Activated CD4-positive, alpha-beta T cell treated with anti-CD3 and anti-CD28 coated beads for 36 hours (primary cell): ENCODE measurements at regions of chr5 and their contacts with region 1.

Region 1: GRCh38 chr5:113022661-113023060 is 46.1 kb downstream of the DCP2 start:
- DNase-seq: no peak
- ATAC-seq: peak; percentile 57
- H3K4me3 Mint-ChIP-seq: peak overlapping the region; percentile 10
- H3K27ac Mint-ChIP-seq: peak overlapping the region; percentile 38
- H3K4me1 Mint-ChIP-seq: peaks cover 64% of the 10 kb centered on the region
- H3K27me3 Mint-ChIP-seq: no peaks in the 10 kb centered on the region

Region 2: GRCh38 chr5:112976432-112977309 is 46.0 kb before region 1 on chr5 and contains the start of gene DCP2:
- CTCF ChIA-PET with region 1: no interaction called
- POLR2A ChIA-PET with region 1: no interaction called
- intact Hi-C with region 1: loop called in 1 of 2 experiments (anchors 1 kb)
- DNase-seq: peak; percentile 96
- ATAC-seq: peak; percentile 94
- H3K4me3 Mint-ChIP-seq: peak within 1 kb of the TSS; percentile 99
- H3K27ac Mint-ChIP-seq: peak within 1 kb of the TSS; percentile 98
- H3K4me1 Mint-ChIP-seq: peaks cover 39% of the 10 kb centered on the region
- H3K27me3 Mint-ChIP-seq: no peaks in the 10 kb centered on the region
- total RNA-seq, gene DCP2: 94.0 to 101 TPM

Region 3: GRCh38 chr5:113132564-113132963 is 109.9 kb after region 1 on chr5:
- CTCF ChIA-PET with region 1: no interaction called
- POLR2A ChIA-PET with region 1: no interaction called
- intact Hi-C with region 1: no loop called
- DNase-seq: no peak
- ATAC-seq: no peak
- H3K4me3 Mint-ChIP-seq: no peak overlapping the region
- H3K27ac Mint-ChIP-seq: no peak overlapping the region
- H3K4me1 Mint-ChIP-seq: no peaks in the 10 kb centered on the region
- H3K27me3 Mint-ChIP-seq: no peaks in the 10 kb centered on the region

Region 4: GRCh38 chr5:113294311-113295110 is 271.9 kb after region 1 on chr5:
- CTCF ChIA-PET with region 1: no interaction called
- POLR2A ChIA-PET with region 1: no interaction called
- intact Hi-C with region 1: loop called in 1 of 2 experiments (anchors 2 kb)
- DNase-seq: peak; percentile 89
- ATAC-seq: peak; percentile 96
- H3K4me3 Mint-ChIP-seq: peak overlapping the region; percentile 78
- H3K27ac Mint-ChIP-seq: peak overlapping the region; percentile 61
- H3K4me1 Mint-ChIP-seq: peaks cover 15% of the 10 kb centered on the region
- H3K27me3 Mint-ChIP-seq: peaks cover 38% of the 10 kb centered on the region

Region 5: DNA sequence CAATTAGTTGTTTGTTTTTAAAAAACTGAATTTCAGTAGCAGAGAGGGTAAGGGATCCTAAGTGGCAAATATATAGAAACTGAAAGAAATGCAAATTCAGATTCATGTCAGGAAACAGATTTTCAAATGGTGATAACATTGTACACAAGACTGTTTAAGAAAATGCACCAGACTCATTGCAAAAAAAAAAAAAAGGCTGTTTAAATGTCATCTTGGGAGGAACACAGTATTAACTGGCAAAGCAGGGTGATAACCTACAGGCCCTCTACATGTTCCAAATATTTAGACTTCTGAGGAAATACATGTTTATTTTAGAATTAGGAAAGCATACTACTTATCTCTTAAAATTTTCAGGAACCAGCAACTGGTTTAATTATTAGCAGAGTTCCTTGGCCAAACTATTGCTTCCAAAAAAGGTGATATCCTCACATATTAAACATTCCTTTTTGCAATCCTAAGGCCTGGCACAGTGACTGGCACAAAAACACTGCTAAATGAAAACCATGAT is 297.7 kb after region 1 on chr5:
- CTCF ChIA-PET with region 1: no interaction called
- POLR2A ChIA-PET with region 1: no interaction called
- intact Hi-C with region 1: no loop called
- DNase-seq: no peak
- ATAC-seq: no peak
- H3K4me3 Mint-ChIP-seq: no peak overlapping the region
- H3K27ac Mint-ChIP-seq: no peak overlapping the region
- H3K4me1 Mint-ChIP-seq: no peaks in the 10 kb centered on the region
- H3K27me3 Mint-ChIP-seq: no peaks in the 10 kb centered on the region